ENCODE measurements at regions of chr4 and their contacts with region 1.

Region 1: GRCh38 chr4:1899149-1900086 is 28.2 kb downstream of the NSD2 start:
- DNase-seq: peak; percentile 78
- ATAC-seq: peak; percentile 93

Region 2: DNA sequence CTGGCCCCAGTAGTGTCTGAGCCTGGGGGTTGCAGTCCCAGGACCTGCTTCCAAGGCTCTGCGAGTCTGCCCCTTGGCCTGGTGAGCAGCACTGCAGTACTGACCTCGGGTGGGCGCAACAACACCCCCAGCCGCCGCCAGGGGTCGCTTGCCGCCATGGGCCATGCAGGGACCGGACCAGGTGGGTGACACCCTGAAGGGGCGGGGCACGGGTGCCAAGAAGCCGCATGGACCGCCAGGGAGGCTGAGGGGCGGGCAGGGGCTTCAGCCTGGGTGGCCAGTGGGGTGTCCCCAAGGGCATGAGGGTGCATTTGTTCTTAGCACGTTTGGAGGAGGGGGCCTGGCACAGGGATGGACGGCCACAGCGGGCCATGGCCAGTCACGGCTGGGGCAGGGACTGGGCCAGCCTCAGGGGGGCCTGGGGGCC is 153.1 kb before region 1 on chr4:
- intact Hi-C with region 1: loop called (anchors 5 kb)
- DNase-seq: peak; percentile 84
- ATAC-seq: peak; percentile 55

Region 3: GRCh38 chr4:1976416-1977352 is 77.3 kb after region 1 on chr4:
- intact Hi-C with region 1: no loop called
- DNase-seq: no peak
- ATAC-seq: no peak